ENCODE measurements at regions of chr1 and their contacts with region 1.

Region 1: GRCh38 chr1:116574581-116575291 is 3.9 kb upstream of the CD58 start:
- DNase-seq: peak; percentile 78
- H3K4me3 ChIP-seq: no peak overlapping the region
- H3K27ac ChIP-seq: no peak overlapping the region
- H3K4me1 ChIP-seq: 0 out of 2 replicates have a peak, but pooled peaks cover 8% of the 10 kb centered on the region
- H3K27me3 ChIP-seq: peaks cover 10% of the 10 kb centered on the region; the same call in 1 of the 2 replicates

Region 2: GRCh38 chr1:116390195-116390594 is 184.5 kb before region 1 on chr1:
- in situ Hi-C with region 1: no loop called
- DNase-seq: no peak
- H3K4me3 ChIP-seq: no peak overlapping the region
- H3K27ac ChIP-seq: no peak overlapping the region
- H3K4me1 ChIP-seq: no peaks in the 10 kb centered on the region
- H3K27me3 ChIP-seq: no peaks in the 10 kb centered on the region

Region 3: GRCh38 chr1:116433275-116434257 is 141.2 kb before region 1 on chr1:
- in situ Hi-C with region 1: no loop called
- DNase-seq: peak; percentile 44
- H3K4me3 ChIP-seq: no peak overlapping the region
- H3K27ac ChIP-seq: no peak overlapping the region
- H3K4me1 ChIP-seq: no peaks in the 10 kb centered on the region
- H3K27me3 ChIP-seq: no peaks in the 10 kb centered on the region

Region 4: DNA sequence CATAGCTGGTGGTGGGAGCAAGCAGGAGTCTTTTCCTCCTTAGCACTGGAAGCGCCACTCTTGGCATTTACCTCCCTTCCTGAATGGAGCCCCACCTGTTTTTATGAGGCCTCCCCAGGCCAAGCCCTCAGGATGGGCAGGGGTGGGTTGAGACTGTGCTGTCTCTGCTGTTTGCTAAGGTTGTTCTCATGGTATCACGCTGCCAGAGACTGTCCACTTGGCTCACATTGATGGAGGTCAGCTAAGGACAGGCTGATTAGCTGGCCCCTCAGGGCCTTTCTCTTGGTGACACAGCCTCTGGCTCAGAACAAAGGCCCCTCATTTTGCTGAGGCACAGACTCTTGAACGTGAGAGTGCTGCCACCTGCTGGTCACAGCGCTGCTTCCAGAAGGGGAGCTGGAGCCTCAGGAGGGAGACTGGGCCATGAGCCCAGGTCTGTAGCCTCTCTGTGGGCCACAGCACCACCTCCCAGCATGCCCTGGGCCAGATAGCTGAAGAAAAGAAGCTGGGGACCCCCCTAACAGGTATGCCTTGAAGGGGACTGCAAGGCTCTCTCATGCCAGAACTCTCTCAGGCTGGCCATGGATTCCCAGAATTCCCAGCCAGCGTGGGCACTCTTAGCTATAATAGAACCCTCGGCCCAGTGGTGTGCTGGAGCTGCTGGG is 89.5 kb before region 1 on chr1:
- in situ Hi-C with region 1: no loop called
- DNase-seq: peak; percentile 89
- H3K4me3 ChIP-seq: no peak overlapping the region
- H3K27ac ChIP-seq: no peak overlapping the region
- H3K4me1 ChIP-seq: peaks cover 36% of the 10 kb centered on the region
- H3K27me3 ChIP-seq: no peaks in the 10 kb centered on the region

Region 5: GRCh38 chr1:117059678-117060440 is 485.1 kb after region 1 on chr1 and contains the start of gene TTF2:
- in situ Hi-C with region 1: loop called (anchors 25 kb)
- DNase-seq: peak; percentile 99
- H3K4me3 ChIP-seq: peak within 1 kb of the TSS; percentile 85
- H3K27ac ChIP-seq: no peak within 1 kb of the TSS
- H3K4me1 ChIP-seq: peaks cover 8% of the 10 kb centered on the region; the same call in 1 of the 2 replicates
- H3K27me3 ChIP-seq: no peaks in the 10 kb centered on the region
- total RNA-seq, gene TTF2: 3.0 and 6.5 TPM in 2 replicates

Measured in GM23248 (cell line).